Sigmoid colon (tissue), 7 donors: ENCODE measurements at regions of chr1 and their contacts with region 1.

Region 1: DNA sequence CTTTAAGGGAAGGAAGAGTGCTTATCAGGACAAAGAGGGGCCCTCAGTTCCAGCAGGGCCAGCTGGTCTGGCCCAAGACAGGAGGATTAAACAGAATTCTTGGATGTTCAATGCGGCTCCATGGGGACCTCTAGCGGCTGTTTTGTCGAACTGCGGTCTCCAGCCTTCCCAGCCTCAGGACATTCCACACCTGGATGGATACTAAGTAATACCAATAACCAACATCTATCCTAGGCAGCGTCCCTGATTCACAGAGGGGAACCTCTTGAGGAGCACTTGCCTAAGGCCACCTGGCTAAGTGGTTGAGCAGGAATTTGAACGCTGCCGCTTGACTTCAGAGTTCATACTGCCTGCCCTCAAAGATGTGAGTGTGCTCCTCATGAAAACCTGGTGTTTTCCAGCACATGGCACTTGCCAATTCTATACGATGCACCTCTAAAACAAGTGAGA is 15.5 kb upstream of the CD247 start:
- DNase-seq: peak; percentile 77
- H3K4me3 ChIP-seq: no peak overlapping the region
- H3K27ac ChIP-seq: peak overlapping the region in 1 of 4 donors; percentile 9
- H3K4me1 ChIP-seq: peaks cover 0 to 6% (median 5%) of the 10 kb centered on the region in 4 donors
- H3K27me3 ChIP-seq: no peaks in the 10 kb centered on the region
- CTCF ChIP-seq: peak; percentile 41 to 91 (median 60)
- EP300 ChIP-seq: no peak
- POLR2A ChIP-seq: no peak

Region 2: DNA sequence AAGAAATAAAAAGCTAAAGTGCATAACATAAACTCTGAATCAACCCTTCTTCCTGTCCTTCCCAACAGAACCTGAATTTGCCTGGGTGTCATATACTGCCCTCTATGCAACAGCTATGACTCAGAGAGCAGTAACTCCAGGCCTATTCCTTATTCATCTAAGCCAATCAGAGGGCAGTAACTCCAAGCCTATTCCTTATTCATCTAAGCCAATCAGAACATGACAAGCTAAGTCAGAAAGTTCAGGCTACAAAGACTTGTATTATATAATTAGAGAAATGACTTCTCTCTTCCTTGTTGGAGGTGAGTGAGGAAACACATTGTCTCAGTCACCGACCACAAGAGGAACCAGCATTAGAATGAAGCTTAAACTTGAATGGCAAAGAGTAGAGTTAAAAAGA is 631.6 kb before region 1 on chr1:
- intact Hi-C with region 1: loop called (anchors 10 kb)
- DNase-seq: no peak
- H3K4me3 ChIP-seq: no peak overlapping the region
- H3K27ac ChIP-seq: peak overlapping the region in 1 of 4 donors; percentile 18
- H3K4me1 ChIP-seq: peaks cover 0 to 50% (median 40%) of the 10 kb centered on the region in 4 donors
- H3K27me3 ChIP-seq: no peaks in the 10 kb centered on the region
- CTCF ChIP-seq: no peak
- EP300 ChIP-seq: no peak
- POLR2A ChIP-seq: no peak

Region 3: GRCh38 chr1:167066333-167067122 is 467.3 kb before region 1 on chr1:
- intact Hi-C with region 1: loop called (anchors 2 kb)
- DNase-seq: peak; percentile 79
- H3K4me3 ChIP-seq: peak overlapping the region in 2 of 4 donors; percentile 21 to 29
- H3K27ac ChIP-seq: no peak overlapping the region
- H3K4me1 ChIP-seq: peaks cover 0 to 7% (median 5%) of the 10 kb centered on the region in 4 donors
- H3K27me3 ChIP-seq: no peaks in the 10 kb centered on the region
- CTCF ChIP-seq: peak; percentile 76 to 96 (median 83)
- EP300 ChIP-seq: no peak
- POLR2A ChIP-seq: no peak

Region 4: DNA sequence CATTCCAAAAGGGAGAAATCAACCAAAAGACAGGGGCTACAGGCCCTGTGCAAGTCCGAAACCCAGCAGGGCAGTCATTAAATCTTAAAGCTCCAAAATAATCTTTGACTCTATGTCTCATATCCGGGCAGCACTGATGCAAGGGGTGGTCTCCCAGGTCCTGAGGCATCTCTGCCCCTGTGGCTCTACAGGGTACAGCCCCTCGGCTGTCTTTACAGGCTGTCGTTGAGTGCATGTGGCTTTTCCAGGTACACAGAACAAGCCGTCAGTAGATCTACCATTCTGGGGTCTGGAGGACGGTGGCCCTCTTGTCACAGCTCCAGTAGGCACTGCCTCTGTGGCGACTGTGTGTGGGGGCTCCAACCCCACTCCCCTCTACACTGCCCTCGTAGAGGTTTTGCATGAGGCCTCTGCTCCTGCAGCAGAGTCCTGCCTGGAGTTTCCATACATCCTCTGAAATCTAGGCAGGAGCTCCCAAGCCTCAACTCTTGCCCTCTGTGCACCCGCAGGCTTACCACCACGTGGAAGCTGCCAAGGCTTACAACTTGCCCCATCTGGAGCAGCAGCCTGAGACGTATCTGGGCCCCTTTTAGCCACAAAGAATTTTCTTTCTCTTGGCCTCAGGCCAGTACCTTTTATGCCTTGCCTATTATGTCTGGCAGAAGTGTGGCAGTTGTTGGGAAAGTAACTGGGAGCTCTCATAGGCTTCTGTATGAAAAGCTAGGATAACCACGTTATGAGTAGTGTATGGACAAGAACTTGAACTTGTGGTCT is 260.7 kb before region 1 on chr1:
- intact Hi-C with region 1: loop called (anchors 5 kb)
- DNase-seq: no peak
- H3K4me3 ChIP-seq: no peak overlapping the region
- H3K27ac ChIP-seq: no peak overlapping the region
- H3K4me1 ChIP-seq: peaks cover 0 to 57% (median 31%) of the 10 kb centered on the region in 4 donors
- H3K27me3 ChIP-seq: no peaks in the 10 kb centered on the region
- CTCF ChIP-seq: no peak
- EP300 ChIP-seq: no peak
- POLR2A ChIP-seq: no peak

Region 5: DNA sequence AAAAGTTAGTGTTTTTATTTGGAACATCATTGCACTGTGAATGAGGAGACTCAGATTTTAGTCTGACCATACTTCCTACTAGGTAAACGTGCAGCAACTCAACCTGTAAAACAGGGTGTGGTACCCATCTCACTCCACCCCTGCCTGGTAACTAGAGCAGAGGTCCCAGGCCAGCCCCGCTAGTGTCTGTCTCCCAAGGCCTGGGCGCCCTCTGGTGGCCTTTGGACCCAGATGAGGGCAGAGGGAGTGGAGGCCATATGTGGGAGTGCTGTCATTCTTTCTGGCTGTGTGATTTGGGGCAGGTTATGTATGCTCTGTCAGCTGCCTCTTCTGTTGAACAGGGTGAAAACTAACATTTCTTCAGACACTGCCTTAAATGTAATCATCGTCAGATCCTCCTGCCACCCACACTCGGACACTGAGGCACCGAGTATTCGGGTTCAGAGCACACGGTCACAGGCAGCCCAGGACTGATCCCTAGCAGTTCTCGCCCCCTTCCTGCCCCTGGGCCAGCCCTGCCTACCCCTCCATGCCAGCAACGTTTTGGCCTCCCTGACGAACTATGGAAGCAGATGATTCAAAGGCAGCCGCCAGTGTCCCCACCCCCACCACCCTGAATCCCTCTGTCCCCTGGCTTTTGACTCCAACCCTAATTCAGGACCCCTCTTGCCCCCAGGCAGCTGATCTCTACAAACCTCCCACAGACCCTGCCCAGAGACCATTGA is 91.6 kb before region 1 on chr1:
- intact Hi-C with region 1: loop called (anchors 5 kb)
- DNase-seq: peak; percentile 87
- H3K4me3 ChIP-seq: no peak overlapping the region
- H3K27ac ChIP-seq: no peak overlapping the region
- H3K4me1 ChIP-seq: peaks cover 0 to 12% (median 9%) of the 10 kb centered on the region in 4 donors
- H3K27me3 ChIP-seq: peaks cover 0 to 20% (median 3%) of the 10 kb centered on the region in 3 donors
- CTCF ChIP-seq: peak; percentile 57 to 82 (median 76)
- EP300 ChIP-seq: no peak
- POLR2A ChIP-seq: no peak

Region 6: DNA sequence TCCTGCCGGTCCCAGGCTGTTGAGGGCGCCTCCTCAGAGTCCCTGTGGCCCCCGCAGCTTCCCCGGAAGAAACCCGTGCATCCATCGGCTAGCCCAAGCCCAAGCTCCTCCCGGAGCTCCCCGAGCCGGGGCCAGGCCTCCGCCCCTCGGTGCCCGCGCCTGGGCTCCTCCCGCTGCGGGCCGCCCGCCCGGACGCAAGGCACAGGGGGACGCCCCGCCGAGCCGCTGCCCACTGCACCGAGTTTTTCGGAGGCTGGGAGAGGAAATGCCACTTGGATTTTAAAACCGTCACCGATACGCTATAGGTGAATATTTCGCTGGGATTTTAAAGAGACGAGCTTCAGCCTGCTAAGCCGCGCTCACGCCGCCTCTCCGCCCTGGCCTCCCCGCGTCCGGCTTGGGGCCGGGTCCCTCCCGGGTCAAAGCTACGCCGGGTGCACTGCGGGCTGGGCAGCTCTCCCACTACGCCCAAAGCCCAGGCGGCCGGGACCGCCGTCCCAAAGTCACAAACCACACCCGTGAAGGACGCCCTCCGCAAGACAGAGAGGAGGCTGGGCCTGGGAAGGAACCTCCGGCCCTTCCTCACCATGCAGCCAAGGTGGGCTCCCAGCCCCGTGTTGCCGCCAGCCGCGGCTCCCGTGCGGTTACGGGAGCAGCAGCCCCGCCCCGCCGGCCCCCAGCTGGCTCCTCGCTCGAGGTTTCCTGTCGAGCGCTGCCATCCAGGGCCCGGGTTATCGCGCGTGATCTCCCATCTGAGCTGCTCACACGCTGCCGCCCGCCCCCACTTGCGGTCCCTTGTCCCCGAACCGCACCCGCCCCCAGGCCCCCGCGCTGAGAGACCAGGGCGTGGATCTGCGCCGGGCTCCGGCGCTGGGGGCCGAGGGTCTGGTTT is 78.7 kb before region 1 on chr1:
- intact Hi-C with region 1: loop called (anchors 5 kb)
- DNase-seq: peak; percentile 82
- H3K4me3 ChIP-seq: peak overlapping the region; percentile 53 to 81 (median 72)
- H3K27ac ChIP-seq: peak overlapping the region; percentile 76 to 87 (median 80)
- H3K4me1 ChIP-seq: peaks cover 0 to 8% (median 5%) of the 10 kb centered on the region in 4 donors
- H3K27me3 ChIP-seq: no peaks in the 10 kb centered on the region
- CTCF ChIP-seq: no peak
- EP300 ChIP-seq: no peak
- POLR2A ChIP-seq: peak in 1 of 2 donors; percentile 19

Region 7: DNA sequence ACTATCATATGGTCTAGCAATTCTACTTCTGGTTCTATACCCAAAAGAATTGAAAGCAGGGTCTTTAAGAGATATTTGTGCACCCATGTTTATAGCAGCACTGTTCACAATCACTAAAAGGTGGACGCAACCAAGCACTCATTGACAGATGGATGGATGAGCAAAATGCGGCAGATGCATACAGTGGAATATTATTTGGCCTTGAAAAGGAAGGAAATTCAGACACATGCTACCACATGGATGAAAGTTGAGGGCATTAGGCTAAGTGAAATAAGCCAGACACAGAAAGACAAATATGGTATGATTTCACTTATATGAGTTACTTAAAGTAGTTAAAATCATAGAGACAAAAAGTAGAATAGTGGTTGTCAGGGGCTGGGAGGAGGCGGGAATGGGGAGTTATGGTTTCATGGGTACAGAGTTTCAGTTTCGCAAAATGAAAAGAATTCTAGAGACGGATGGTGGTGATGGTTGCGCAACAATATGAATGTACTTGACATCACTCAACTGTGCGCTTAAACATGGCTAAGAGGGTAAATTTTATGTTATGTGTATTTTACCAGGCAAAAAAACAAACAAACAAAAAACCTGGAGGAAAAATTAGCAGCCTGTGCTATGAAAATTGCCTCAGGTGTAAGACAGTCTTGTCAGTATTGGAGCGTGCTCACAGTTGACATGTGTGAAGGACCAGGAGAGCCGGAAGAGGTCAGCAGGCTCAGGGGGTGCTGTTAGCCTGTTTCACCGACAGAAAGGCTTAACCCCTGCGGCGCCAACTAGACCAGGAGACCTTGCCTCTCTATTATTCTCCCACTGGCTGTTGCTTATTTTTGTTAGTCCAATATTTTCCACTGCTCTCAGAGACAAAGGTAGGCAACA is 42.1 kb before region 1 on chr1:
- intact Hi-C with region 1: no loop called
- DNase-seq: peak; percentile 13
- H3K4me3 ChIP-seq: no peak overlapping the region
- H3K27ac ChIP-seq: no peak overlapping the region
- H3K4me1 ChIP-seq: no peaks in the 10 kb centered on the region
- H3K27me3 ChIP-seq: peaks cover 0 to 9% (median 0%) of the 10 kb centered on the region in 3 donors
- CTCF ChIP-seq: no peak
- EP300 ChIP-seq: no peak
- POLR2A ChIP-seq: no peak